Activated CD4-positive, alpha-beta T cell treated with anti-CD3 and anti-CD28 coated beads, Interleukin-2, amount 10 ng/mL, durations not matched to agents 24 days and 14 days (primary cell): ENCODE measurements at regions of chr5 and their contacts with region 1.

Region 1: DNA sequence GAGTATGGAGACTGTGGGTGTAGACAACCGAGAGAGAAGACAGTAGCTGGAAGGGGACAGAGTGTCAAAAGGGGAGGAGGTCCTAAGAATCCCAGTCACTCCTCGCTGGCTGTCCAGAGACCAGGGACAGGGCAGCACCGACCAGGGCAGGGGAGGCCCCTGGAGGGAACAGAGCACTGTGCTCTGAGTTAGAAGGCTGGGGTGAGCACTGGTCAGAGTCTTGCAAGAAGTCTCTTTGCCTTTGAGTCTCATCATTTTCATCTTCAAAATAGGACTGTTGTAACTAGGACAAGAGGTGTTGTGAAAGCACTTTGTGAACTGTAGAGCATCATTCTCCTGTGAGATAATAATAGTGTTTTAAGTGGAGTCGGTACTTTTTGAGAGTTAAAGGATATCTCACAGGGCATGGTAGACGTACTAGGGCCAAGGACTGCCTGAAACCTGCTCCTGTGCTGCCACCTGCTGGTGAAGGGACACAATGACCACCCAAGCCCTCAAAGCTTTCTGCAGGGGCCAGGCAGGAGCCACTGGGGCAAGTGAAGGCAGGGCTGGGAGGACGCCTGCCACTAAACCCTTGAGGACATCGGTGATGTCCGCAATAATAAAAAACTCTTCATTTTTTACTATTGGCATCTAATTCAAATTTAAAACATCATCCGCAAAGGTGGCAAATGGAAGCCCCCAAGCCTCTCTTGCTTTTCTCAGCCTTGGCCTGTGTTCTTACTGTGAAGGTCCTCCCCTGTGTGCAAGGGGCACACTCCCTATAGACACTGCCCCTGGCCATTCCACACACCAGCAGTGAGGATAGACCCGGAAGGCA is 28.2 kb downstream of the SLC6A7 start:
- DNase-seq: peak; percentile 94
- H3K4me3 Mint-ChIP-seq: no peak overlapping the region
- H3K27ac Mint-ChIP-seq: no peak overlapping the region
- H3K4me1 Mint-ChIP-seq: no peaks in the 10 kb centered on the region
- H3K27me3 Mint-ChIP-seq: peaks cover 3% of the 10 kb centered on the region

Region 2: GRCh38 chr5:149834246-149834855 is 383.7 kb before region 1 on chr5:
- intact Hi-C with region 1: loop called (anchors 1 kb)
- DNase-seq: peak; percentile 88
- H3K4me3 Mint-ChIP-seq: no peak overlapping the region
- H3K27ac Mint-ChIP-seq: no peak overlapping the region
- H3K4me1 Mint-ChIP-seq: peaks cover 10% of the 10 kb centered on the region
- H3K27me3 Mint-ChIP-seq: no peaks in the 10 kb centered on the region

Region 3: GRCh38 chr5:150000256-150000989 is 217.7 kb before region 1 on chr5 and contains the starts of genes HMGXB3 and TIGD6:
- intact Hi-C with region 1: loop called (anchors 10 kb)
- DNase-seq: peak; percentile 96
- H3K4me3 Mint-ChIP-seq: peak within 1 kb of the TSS; percentile 86
- H3K27ac Mint-ChIP-seq: peak within 1 kb of the TSS; percentile 97
- H3K4me1 Mint-ChIP-seq: peaks cover 41% of the 10 kb centered on the region
- H3K27me3 Mint-ChIP-seq: no peaks in the 10 kb centered on the region
- total RNA-seq, gene HMGXB3: 43.1 and 47.8 TPM in 2 replicates
- total RNA-seq, gene TIGD6: 2.5 TPM in 2 replicates

Region 4: DNA sequence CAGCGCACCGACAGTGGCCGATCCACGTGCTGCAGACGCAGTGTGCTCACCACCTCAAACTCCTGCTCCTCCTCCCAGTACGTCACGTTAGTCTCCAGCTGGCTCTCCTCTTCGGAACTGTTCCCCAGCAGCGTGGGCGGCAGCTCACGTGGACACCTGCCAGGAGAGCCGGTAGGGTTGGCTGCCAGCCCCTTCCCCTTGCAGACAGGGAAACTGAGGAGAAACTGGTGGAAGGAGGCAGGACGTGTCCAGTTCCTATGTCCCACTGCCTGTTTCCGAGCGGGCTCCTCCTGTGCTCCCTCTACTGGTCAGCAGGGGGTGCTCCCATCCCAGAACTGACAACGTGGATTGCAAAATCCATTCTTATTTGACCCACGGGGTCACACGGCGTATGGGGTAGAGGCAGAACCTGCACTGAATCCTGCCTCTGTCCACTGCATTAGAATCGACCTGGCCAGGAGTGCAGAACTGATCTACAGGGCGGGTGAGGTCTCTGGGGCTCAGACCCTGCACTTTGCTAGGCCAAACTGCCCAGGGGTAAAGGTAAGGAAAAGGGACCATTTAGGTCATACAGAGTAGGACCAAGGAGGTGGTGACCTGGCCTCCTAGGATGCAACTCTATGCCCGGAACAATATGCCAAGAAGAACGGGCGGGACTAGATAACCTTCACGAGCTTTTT is 88.1 kb before region 1 on chr5:
- intact Hi-C with region 1: loop called (anchors 1 kb)
- DNase-seq: peak; percentile 86
- H3K4me3 Mint-ChIP-seq: no peak overlapping the region
- H3K27ac Mint-ChIP-seq: no peak overlapping the region
- H3K4me1 Mint-ChIP-seq: peaks cover 2% of the 10 kb centered on the region
- H3K27me3 Mint-ChIP-seq: no peaks in the 10 kb centered on the region

Region 5: GRCh38 chr5:150161242-150162141 is 56.6 kb before region 1 on chr5:
- intact Hi-C with region 1: loop called (anchors 1 kb)
- DNase-seq: peak; percentile 94
- H3K4me3 Mint-ChIP-seq: no peak overlapping the region
- H3K27ac Mint-ChIP-seq: no peak overlapping the region
- H3K4me1 Mint-ChIP-seq: peaks cover 3% of the 10 kb centered on the region
- H3K27me3 Mint-ChIP-seq: peaks cover 30% of the 10 kb centered on the region